Tibial artery (tissue), 4 donors: ENCODE measurements at regions of chr6 and their contacts with region 1.

Region 1: DNA sequence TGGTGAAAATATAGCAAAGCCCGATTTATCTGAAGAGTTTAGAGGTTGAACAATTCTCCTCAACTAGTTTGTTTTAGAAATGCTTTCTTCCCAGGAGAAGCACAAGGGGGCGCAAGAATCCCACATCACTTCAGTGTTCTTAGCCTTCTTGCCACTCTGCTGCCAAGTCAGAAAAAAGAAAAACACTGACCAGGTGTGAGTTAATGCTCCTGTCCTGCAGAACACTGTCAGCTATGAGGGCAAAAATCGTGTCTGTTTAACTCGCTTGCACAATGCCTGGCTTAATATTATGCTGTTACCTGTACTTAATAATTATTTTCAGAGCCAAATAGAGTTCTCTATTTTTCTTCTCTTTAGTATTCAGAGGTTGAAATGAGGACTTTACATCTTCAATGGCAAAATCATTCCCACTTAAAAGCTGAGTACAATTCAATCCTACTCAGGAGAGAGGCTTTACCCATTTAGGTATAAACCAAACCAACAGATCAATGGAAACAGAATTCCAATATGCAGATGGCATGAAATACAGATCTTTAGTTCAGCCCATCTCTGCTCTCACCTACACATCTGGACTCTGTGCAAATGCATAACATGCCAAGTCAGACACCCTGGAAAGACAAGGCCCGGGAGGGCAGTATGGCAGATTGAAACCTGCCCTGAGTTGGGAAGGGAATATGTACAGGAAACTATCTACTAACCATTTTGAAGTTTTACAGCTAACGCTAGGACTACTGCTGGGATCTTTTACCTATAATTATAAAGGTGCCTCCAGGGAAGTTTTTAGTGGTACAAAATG is 71.4 kb upstream of the TULP1 start:
- DNase-seq: no peak
- H3K4me3 ChIP-seq: no peak overlapping the region
- H3K27ac ChIP-seq: peak overlapping the region; percentile 46 to 90
- H3K4me1 ChIP-seq: peaks cover 0 to 58% (median 43%) of the 10 kb centered on the region in 4 donors
- H3K27me3 ChIP-seq: no peaks in the 10 kb centered on the region
- CTCF ChIP-seq: peak; percentile 70 to 85

Region 2: DNA sequence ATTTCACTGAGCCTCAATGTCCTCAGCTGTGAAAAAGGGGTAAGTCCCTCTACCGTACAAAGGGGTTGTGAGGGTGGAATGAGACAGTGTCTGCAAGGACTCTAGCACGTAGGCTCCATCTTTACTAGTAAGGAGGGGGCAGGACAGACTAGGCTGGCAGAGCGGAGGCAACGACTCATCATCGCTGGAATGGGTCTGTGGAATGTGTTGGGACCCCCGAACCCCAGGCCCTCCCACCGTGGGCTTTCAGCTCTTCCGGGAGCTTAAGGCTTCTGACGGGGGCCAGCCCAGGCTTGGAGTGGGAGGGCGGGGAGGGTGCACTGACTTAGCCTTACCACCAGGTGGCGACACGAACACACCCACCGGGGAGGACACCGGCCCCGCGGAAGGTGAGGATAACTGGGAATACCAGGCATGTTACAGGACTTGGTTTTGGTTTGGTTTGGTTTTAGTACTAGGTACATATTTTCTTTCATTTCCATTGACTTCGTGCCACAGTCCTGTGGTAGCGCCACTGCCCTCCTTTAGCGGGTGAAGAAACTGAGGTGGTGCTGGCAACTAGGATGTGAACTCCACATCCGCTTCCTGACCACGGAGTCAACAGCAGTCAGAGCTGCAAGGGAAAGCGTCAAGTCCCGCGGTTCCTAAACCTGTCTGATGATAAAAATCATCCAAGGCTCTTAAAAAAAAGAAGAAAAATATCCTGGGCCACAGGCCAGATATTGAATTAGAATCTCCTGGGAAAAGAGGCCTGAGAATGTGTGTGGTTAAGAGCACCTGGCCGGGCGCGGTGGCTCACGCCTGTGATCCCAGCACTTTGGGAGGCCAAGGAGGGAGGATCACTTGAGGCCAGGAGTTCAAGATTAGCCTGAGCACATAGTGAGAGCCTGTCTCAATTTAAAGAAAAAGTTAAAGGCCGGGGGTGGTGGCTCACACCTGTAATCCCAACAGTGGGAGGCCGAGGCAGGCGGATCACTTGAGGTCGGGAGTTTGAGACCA is 61.1 kb before region 1 on chr6:
- intact Hi-C with region 1: loop called (anchors 5 kb)
- DNase-seq: peak; percentile 61 to 82
- H3K4me3 ChIP-seq: peak overlapping the region in 1 of 2 donors; percentile 40
- H3K27ac ChIP-seq: no peak overlapping the region
- H3K4me1 ChIP-seq: peaks cover 0 to 9% (median 2%) of the 10 kb centered on the region in 4 donors
- H3K27me3 ChIP-seq: peaks cover 0 to 6% of the 10 kb centered on the region in 2 donors
- CTCF ChIP-seq: peak; percentile 96 to 100

Region 3: GRCh38 chr6:35688581-35689322 is 104.7 kb after region 1 on chr6 and contains the start of gene FKBP5:
- intact Hi-C with region 1: loop called (anchors 10 kb)
- DNase-seq: peak; percentile 97 to 98
- H3K4me3 ChIP-seq: peak within 1 kb of the TSS; percentile 91 to 98
- H3K27ac ChIP-seq: peak within 1 kb of the TSS; percentile 98 to 99
- H3K4me1 ChIP-seq: peaks cover 0 to 58% (median 36%) of the 10 kb centered on the region in 4 donors
- H3K27me3 ChIP-seq: no peaks in the 10 kb centered on the region
- CTCF ChIP-seq: peak in 1 of 2 experiments; percentile 5

Region 4: GRCh38 chr6:35737413-35738211 is 153.5 kb after region 1 on chr6:
- intact Hi-C with region 1: loop called (anchors 1 kb)
- DNase-seq: no peak
- H3K4me3 ChIP-seq: no peak overlapping the region
- H3K27ac ChIP-seq: peak overlapping the region in 1 of 2 donors; percentile 5
- H3K4me1 ChIP-seq: peaks cover 4 to 47% (median 30%) of the 10 kb centered on the region in 4 donors
- H3K27me3 ChIP-seq: no peaks in the 10 kb centered on the region
- CTCF ChIP-seq: peak; percentile 92 to 98